ENCODE measurements at regions of chr19 and their contacts with region 1.

Region 1: DNA sequence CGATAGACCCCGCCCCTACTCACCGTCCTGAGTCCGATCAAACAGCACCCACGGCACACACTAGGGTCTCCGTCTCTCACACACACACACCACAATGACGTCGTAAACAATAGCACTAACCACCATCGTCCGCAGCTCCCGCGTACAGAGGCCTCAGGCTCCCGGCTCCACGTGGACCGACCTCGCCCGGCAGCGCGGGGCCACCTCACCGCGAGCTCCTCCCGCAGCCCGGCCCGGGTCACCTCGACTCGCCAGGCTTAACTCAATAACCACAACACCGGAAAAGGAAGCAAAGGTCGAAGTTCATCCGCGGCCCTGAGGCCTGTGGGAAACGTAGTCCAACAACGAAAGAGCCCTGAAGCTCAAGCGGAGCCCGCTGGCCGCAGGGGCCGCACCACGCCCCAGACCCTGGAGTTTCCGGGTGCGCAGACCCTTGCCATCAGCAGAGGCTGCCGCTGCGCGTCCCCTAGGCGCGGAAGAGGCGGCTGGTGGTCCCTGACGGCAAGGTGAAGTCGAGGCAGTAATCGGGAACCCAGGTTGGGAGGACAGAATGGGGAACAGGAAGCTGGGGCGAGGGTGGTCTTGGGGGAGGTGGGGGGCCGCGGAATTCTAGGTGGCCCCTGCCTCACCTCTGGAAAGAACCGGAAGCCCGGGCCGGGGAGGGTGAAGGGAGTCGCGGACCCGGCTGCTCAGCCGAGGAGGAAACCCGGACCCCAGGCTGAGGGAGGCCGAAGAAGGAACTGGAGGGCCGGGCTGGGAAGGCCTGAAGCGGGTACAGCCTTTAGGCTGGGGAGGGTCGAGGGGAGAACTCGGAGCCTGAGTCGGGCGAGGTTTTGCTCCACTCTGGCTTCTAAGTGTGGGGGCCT is at the start of gene ZNF529:
- DNase-seq: peak; percentile 92
- ATAC-seq: peak; percentile 98 to 99
- total RNA-seq, gene ZNF529: 12.3 to 12.7 TPM

Region 2: GRCh38 chr19:36665832-36666231 is 92.6 kb after region 1 on chr19:
- intact Hi-C with region 1: loop called in 1 of 2 experiments (anchors 5 kb)
- DNase-seq: no peak
- ATAC-seq: no peak